Naive thymus-derived CD4-positive, alpha-beta T cell (primary cell): ENCODE measurements at regions of chr6 and their contacts with region 1.

Region 1: DNA sequence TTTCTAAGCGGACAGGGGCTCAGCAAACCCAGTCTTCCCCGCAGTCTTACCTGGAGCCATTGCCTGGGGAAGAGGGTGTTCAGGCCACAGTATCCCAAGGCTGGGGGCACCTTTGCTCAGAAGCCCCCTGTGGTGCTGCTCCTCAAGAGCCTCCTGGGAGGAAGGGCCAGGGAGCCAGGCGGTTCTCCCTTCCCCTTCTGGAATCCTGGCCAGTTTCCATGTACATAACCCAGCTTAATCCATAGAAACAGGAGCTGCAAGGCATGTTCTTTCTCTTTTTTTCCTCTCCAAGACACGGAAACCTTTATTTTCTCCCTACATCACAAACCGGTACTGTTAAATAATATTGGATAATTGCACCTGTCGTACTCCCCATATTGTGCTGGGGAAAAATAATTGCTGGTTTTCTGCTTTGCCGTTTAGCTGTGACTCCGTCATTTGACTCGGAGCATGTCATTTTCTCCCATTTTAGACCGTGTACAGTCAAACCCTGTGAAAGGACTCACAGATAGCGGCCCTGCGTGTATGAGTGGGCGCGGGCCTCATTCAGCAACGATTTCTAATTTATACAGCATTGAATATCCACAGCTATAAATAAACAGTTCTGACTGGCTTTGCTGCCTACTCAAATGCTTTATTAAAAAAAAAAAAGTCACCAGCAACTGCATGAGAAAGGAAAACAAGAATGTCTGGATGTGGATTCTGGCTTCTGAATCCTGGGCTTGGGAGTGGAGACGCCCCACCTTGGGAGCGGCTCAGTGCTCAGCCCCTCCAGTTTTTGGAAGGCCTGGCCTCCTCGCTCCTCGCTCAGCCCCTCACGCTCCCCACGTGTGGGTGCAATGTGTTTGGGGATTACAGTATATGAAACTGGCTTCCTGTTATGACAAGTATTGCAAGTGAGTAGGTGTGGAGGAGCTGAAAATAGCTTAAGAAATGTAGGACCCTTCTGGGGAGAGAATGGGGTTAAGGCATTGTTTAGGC is 67.3 kb downstream of the ADTRP start:
- DNase-seq: peak in 8 of 9 donors; percentile 22 to 79 (median 38)
- ATAC-seq: peak; percentile 28
- H3K4me3 ChIP-seq: peak overlapping the region; percentile 13
- H3K4me3 Mint-ChIP-seq: peak overlapping the region; percentile 71 to 86 (median 75)
- H3K27ac ChIP-seq: peak overlapping the region; percentile 67
- H3K27ac Mint-ChIP-seq: peak overlapping the region; percentile 90 to 100 (median 97)
- H3K4me1 ChIP-seq: peaks cover 16 to 84% of the 10 kb centered on the region in 2 donors
- H3K4me1 Mint-ChIP-seq: peaks cover 55 to 92% (median 89%) of the 10 kb centered on the region in 7 donors
- H3K27me3 ChIP-seq: no peaks in the 10 kb centered on the region
- H3K27me3 Mint-ChIP-seq: no peaks in the 10 kb centered on the region

Region 2: DNA sequence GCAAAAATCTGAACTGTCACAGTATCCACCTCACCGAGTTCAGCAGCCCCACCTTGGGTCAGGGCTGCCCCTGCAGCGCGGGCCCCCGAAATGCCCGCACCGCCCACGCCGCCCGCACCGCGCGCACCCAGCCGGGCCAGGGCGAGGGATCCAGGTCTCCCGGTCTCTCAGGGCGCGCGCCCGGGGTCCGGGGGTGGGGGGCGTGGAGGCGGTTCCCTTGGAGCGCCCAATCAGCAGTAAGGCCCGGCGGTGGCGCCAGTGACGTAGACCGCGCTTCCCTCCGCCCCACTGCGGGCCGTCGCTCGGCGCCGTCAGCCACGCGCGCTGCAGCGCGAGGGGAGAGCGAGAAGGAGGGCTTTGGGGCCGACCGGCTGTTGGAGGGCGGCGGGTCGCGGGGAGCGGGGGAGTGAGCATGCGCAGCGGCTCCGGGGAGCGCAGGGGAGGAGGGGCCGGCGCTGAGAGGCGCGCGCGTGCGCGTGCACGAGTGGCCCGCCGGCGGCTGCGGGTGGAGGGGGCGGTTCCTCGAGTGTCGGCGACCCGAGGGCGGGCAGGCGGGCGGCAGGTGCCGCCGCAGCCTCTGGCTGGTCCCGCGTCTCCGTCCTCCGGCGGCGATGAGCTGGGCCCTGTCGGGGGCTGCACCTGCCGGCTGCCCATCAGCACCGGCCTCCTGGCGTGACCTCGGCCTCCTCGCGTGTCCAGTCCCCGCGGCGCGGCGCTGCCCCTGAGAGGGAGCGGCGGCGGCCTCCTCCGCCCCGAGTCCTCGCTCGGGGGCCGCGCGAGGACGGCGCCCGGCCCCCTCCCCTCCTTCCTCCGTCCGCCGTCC is 173.9 kb before region 1 on chr6 and contains the start of gene TMEM170B:
- CTCF ChIA-PET with region 1: no interaction called
- POLR2A ChIA-PET with region 1: no interaction called
- intact Hi-C with region 1: loop called in 1 of 2 experiments (anchors 5 kb)
- DNase-seq: peak; percentile 94 to 99 (median 98)
- ATAC-seq: peak; percentile 95
- H3K4me3 ChIP-seq: peak within 1 kb of the TSS; percentile 62
- H3K4me3 Mint-ChIP-seq: peak within 1 kb of the TSS; percentile 82 to 90 (median 88)
- H3K27ac ChIP-seq: peak within 1 kb of the TSS; percentile 76
- H3K27ac Mint-ChIP-seq: peak within 1 kb of the TSS in 8 of 9 donors; percentile 67 to 93 (median 83)
- H3K4me1 ChIP-seq: peaks cover 4 to 5% of the 10 kb centered on the region in 2 donors
- H3K4me1 Mint-ChIP-seq: peaks cover 6 to 28% (median 19%) of the 10 kb centered on the region in 7 donors
- H3K27me3 ChIP-seq: no peaks in the 10 kb centered on the region
- H3K27me3 Mint-ChIP-seq: peaks cover 0 to 76% (median 7%) of the 10 kb centered on the region in 5 donors
- total RNA-seq, gene TMEM170B: 0.29 to 12.7 (median 3.4) TPM

Region 3: GRCh38 chr6:11722805-11723631 is 11.7 kb after region 1 on chr6:
- CTCF ChIA-PET with region 1: interaction called, 21 read pairs
- POLR2A ChIA-PET with region 1: interaction called, 126 read pairs
- intact Hi-C with region 1: loop called in 1 of 2 experiments (anchors 1 kb)
- DNase-seq: peak in 5 of 9 donors; percentile 6 to 43 (median 20)
- ATAC-seq: peak; percentile 31
- H3K4me3 ChIP-seq: peak overlapping the region; percentile 12
- H3K4me3 Mint-ChIP-seq: peak overlapping the region; percentile 59 to 93 (median 78)
- H3K27ac ChIP-seq: peak overlapping the region; percentile 60
- H3K27ac Mint-ChIP-seq: peak overlapping the region; percentile 61 to 96 (median 88)
- H3K4me1 ChIP-seq: peaks cover 0 to 63% of the 10 kb centered on the region in 2 donors
- H3K4me1 Mint-ChIP-seq: peaks cover 45 to 86% (median 77%) of the 10 kb centered on the region in 7 donors
- H3K27me3 ChIP-seq: no peaks in the 10 kb centered on the region
- H3K27me3 Mint-ChIP-seq: no peaks in the 10 kb centered on the region

Region 4: GRCh38 chr6:11770546-11771466 is 59.5 kb after region 1 on chr6:
- CTCF ChIA-PET with region 1: no interaction called
- POLR2A ChIA-PET with region 1: no interaction called
- intact Hi-C with region 1: no loop called
- DNase-seq: no peak
- ATAC-seq: peak; percentile 77
- H3K4me3 ChIP-seq: no peak overlapping the region
- H3K4me3 Mint-ChIP-seq: no peak overlapping the region
- H3K27ac ChIP-seq: no peak overlapping the region
- H3K27ac Mint-ChIP-seq: no peak overlapping the region
- H3K4me1 ChIP-seq: no peaks in the 10 kb centered on the region
- H3K4me1 Mint-ChIP-seq: peaks cover 0 to 21% (median 9%) of the 10 kb centered on the region in 7 donors
- H3K27me3 ChIP-seq: no peaks in the 10 kb centered on the region
- H3K27me3 Mint-ChIP-seq: peaks cover 0 to 4% (median 0%) of the 10 kb centered on the region in 5 donors

Region 5: DNA sequence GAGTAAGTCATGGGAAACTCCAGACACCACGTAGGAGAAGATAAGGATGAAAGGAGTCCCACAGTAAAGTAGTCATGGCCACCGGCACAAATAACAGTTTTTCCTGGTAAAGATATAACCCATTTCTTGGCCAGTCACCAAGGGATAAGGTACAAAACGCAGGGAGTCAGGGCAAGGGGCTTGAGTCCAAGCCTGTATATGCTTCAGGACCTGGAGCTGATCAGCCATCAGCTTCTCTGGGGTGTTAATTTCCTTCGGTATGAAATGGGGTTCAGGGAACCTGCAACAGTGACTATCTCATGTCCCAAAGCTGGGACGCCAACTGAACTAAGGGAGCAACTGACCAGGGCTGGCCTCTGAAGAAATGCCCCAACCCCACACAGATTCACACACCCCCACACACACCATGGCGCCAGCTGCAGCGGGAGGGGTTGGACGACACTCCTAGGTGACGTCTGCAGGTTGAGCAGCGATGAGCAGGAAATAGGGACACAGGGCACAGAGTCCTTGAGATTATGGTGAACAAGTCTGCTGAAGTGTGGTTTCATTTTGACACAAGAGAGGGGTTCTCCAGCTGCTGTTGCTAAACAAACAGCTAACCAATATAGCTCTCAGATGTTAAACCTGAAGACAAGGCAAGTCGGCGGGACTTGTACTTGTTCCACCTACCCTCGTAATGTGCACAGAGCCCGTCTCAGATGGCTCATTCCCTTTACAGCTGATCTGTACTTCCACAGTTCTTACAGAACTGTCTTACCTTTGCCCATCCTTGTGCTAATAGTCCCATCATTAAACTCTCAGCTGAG is 74.7 kb after region 1 on chr6:
- CTCF ChIA-PET with region 1: no interaction called
- POLR2A ChIA-PET with region 1: no interaction called
- intact Hi-C with region 1: loop called in 1 of 2 experiments (anchors 5 kb)
- DNase-seq: peak in 1 of 9 donors; percentile 47
- ATAC-seq: peak; percentile 66
- H3K4me3 ChIP-seq: peak overlapping the region; percentile 7
- H3K4me3 Mint-ChIP-seq: peak overlapping the region in 5 of 10 donors; percentile 2 to 61 (median 26)
- H3K27ac ChIP-seq: no peak overlapping the region
- H3K27ac Mint-ChIP-seq: peak overlapping the region in 2 of 9 donors; percentile 12 to 21
- H3K4me1 ChIP-seq: no peaks in the 10 kb centered on the region
- H3K4me1 Mint-ChIP-seq: peaks cover 0 to 7% (median 0%) of the 10 kb centered on the region in 7 donors
- H3K27me3 ChIP-seq: no peaks in the 10 kb centered on the region
- H3K27me3 Mint-ChIP-seq: peaks cover 0 to 3% (median 0%) of the 10 kb centered on the region in 5 donors

Region 6: GRCh38 chr6:11798096-11798495 is 86.8 kb after region 1 on chr6:
- CTCF ChIA-PET with region 1: no interaction called
- POLR2A ChIA-PET with region 1: no interaction called
- intact Hi-C with region 1: no loop called
- DNase-seq: no peak
- ATAC-seq: no peak
- H3K4me3 ChIP-seq: no peak overlapping the region
- H3K4me3 Mint-ChIP-seq: no peak overlapping the region
- H3K27ac ChIP-seq: no peak overlapping the region
- H3K27ac Mint-ChIP-seq: no peak overlapping the region
- H3K4me1 ChIP-seq: no peaks in the 10 kb centered on the region
- H3K4me1 Mint-ChIP-seq: no peaks in the 10 kb centered on the region
- H3K27me3 ChIP-seq: no peaks in the 10 kb centered on the region
- H3K27me3 Mint-ChIP-seq: no peaks in the 10 kb centered on the region

Region 7: DNA sequence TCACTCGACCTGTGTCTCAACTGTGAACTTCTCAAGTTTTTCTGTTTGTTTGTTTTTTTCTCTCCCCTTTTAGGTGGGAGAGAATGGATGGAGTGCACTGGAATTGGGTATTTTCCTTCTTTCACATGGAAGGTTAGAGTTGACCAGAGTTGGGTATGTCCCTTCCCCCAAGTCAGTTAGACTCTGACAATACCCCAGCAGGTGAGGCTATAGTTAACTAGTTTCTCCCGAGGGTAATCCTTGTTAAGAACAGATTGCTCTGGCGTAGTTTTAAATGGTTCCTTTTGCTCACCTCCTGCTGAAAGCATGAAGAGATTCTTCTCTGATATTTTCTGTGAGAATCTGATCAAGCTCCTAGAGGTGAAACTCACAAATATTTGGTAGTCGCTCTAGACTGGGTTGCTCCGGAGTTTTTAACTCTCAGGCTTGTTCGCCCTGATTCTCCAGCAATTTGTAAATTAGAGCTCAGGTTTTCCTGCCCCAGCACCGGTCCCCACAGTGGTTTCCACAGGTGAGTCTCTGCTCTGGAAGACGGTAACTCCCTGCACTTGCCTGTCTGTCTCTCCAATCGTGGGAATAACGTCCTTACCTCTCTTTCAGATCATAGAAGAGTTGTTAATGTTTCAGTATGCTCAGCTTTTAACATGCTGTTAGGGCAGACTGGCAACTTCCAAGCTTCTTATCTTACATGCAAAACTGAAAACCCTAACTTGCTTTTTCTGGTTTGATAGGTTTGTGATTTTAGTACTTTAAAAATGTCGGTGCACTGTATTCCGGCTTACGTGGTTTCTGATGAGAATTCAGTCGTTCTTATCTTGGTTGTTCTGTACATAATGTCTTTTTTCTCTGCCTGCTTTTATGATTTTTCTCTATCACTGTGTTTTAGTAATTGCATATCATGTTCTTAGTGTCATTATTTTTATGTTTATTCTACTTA is 189.6 kb after region 1 on chr6:
- CTCF ChIA-PET with region 1: no interaction called
- POLR2A ChIA-PET with region 1: no interaction called
- intact Hi-C with region 1: loop called in 1 of 2 experiments (anchors 5 kb)
- DNase-seq: peak in 5 of 9 donors; percentile 23 to 58 (median 47)
- ATAC-seq: peak; percentile 61
- H3K4me3 ChIP-seq: peak overlapping the region; percentile 38
- H3K4me3 Mint-ChIP-seq: peak overlapping the region in 9 of 10 donors; percentile 39 to 86 (median 83)
- H3K27ac ChIP-seq: peak overlapping the region; percentile 44
- H3K27ac Mint-ChIP-seq: peak overlapping the region in 8 of 9 donors; percentile 2 to 92 (median 84)
- H3K4me1 ChIP-seq: peaks cover 0 to 8% of the 10 kb centered on the region in 2 donors
- H3K4me1 Mint-ChIP-seq: peaks cover 7 to 36% (median 31%) of the 10 kb centered on the region in 7 donors
- H3K27me3 ChIP-seq: no peaks in the 10 kb centered on the region
- H3K27me3 Mint-ChIP-seq: peaks cover 0 to 11% (median 0%) of the 10 kb centered on the region in 5 donors

Region 8: GRCh38 chr6:11975353-11975977 is 264.2 kb after region 1 on chr6:
- CTCF ChIA-PET with region 1: no interaction called
- POLR2A ChIA-PET with region 1: no interaction called
- intact Hi-C with region 1: no loop called
- DNase-seq: peak in 1 of 9 donors; percentile 7
- ATAC-seq: peak; percentile 97
- H3K4me3 ChIP-seq: no peak overlapping the region
- H3K4me3 Mint-ChIP-seq: peak overlapping the region in 7 of 10 donors; percentile 8 to 73 (median 53)
- H3K27ac ChIP-seq: no peak overlapping the region
- H3K27ac Mint-ChIP-seq: peak overlapping the region in 7 of 9 donors; percentile 1 to 53 (median 23)
- H3K4me1 ChIP-seq: no peaks in the 10 kb centered on the region
- H3K4me1 Mint-ChIP-seq: peaks cover 7 to 40% (median 21%) of the 10 kb centered on the region in 7 donors
- H3K27me3 ChIP-seq: no peaks in the 10 kb centered on the region
- H3K27me3 Mint-ChIP-seq: peaks cover 0 to 2% (median 0%) of the 10 kb centered on the region in 5 donors

Region 9: DNA sequence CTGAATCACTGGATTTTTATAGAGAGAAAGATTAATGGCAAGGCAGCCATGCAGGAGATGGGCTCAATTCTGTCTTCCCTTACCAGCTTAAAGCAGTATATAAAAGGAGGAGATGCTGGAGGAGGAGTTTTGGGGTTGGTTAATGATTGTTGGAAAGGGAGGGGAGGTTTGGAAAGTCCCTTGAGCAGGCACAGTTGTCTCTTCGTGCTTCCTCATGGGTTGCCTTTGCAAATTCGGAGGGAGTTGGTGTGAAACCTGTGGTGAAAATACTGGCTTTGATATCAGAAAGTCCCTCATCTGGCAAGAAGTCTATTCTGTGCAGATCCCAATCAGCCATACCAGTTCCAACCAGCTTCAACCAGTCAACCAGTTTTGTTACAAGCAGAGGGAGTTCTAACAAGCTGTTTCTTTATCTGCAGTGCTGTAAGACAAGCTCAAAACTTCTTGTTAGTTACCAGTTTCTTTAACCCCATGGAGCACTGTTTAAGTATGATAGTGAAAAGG is 407.8 kb after region 1 on chr6:
- CTCF ChIA-PET with region 1: no interaction called
- POLR2A ChIA-PET with region 1: no interaction called
- intact Hi-C with region 1: loop called in 1 of 2 experiments (anchors 2 kb)
- DNase-seq: peak in 8 of 9 donors; percentile 16 to 76 (median 48)
- ATAC-seq: peak; percentile 92
- H3K4me3 ChIP-seq: no peak overlapping the region
- H3K4me3 Mint-ChIP-seq: peak overlapping the region in 8 of 10 donors; percentile 1 to 56 (median 35)
- H3K27ac ChIP-seq: no peak overlapping the region
- H3K27ac Mint-ChIP-seq: peak overlapping the region; percentile 28 to 85 (median 68)
- H3K4me1 ChIP-seq: peaks cover 9 to 21% of the 10 kb centered on the region in 2 donors
- H3K4me1 Mint-ChIP-seq: peaks cover 28 to 81% (median 70%) of the 10 kb centered on the region in 7 donors
- H3K27me3 ChIP-seq: no peaks in the 10 kb centered on the region
- H3K27me3 Mint-ChIP-seq: no peaks in the 10 kb centered on the region